H1 (cell line): ENCODE measurements at regions of chr1 and their contacts with region 1.

Region 1: DNA sequence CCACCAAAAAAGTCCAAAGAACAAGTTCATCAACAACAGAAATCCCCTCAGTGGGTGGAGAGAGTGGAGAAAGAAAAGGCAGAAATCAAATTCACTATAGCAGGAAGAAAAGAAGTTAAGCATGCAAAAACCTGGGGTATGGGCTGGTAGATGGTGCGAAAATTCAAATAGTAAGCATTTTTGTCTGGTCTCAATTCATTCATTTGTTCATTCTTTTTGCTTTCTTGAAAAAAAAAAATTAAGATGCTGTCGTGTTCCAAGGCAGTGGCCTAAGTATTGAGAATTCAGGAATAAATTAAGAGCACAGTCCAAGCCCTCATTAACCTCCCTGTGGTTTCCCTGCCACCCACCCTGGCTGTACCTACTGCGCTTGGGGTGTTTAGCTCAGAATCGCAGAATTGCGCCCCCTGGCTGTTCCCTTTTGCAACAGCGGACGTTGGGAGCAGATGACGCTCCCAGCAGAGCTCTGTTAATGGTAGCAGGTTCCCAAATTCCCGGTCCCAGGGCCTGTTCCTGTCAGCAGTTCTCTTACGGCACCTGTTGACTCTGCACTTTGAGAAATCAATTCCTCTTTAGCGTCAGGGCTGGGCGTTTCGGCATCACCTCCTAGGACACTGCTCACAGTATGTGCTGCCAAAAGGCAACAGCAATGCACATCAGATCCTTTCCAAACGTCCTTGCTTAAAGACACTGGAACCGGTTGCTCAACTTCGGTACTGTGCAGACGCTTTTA is 34.0 kb upstream of the SSX2IP start:
- DNase-seq: peak; percentile 69 to 89
- H3K4me3 ChIP-seq: no peak overlapping the region
- H3K27ac ChIP-seq: no peak overlapping the region
- H3K4me1 ChIP-seq: peaks cover 0 to 5% (median 0%) of the 10 kb centered on the region in 4 experiments; a peak in 2 of 7 replicates
- H3K27me3 ChIP-seq: no peaks in the 10 kb centered on the region
- CTCF ChIP-seq: peak; percentile 89 to 93 (median 89)
- EP300 ChIP-seq: no peak
- POLR2A ChIP-seq: no peak
- RAD21 ChIP-seq: peak; percentile 69 to 78

Region 2: GRCh38 chr1:83978056-83978455 is 746.2 kb before region 1 on chr1:
- CTCF ChIA-PET with region 1: no interaction called
- POLR2A ChIA-PET with region 1: no interaction called
- DNase-seq: no peak
- H3K4me3 ChIP-seq: no peak overlapping the region
- H3K27ac ChIP-seq: no peak overlapping the region
- H3K4me1 ChIP-seq: no peaks in the 10 kb centered on the region
- H3K27me3 ChIP-seq: no peaks in the 10 kb centered on the region
- CTCF ChIP-seq: no peak
- EP300 ChIP-seq: no peak
- POLR2A ChIP-seq: no peak
- RAD21 ChIP-seq: no peak

Region 3: GRCh38 chr1:84668185-84668584 is 56.1 kb before region 1 on chr1:
- CTCF ChIA-PET with region 1: interaction called, 21 read pairs
- POLR2A ChIA-PET with region 1: no interaction called
- DNase-seq: no peak
- H3K4me3 ChIP-seq: no peak overlapping the region
- H3K27ac ChIP-seq: no peak overlapping the region
- H3K4me1 ChIP-seq: peaks cover 0 to 2% (median 0%) of the 10 kb centered on the region in 4 experiments; a peak in 1 of 7 replicates
- H3K27me3 ChIP-seq: peaks cover 0 to 1% (median 0%) of the 10 kb centered on the region in 4 experiments; a peak in 1 of 7 replicates
- CTCF ChIP-seq: peak in 2 of 3 experiments; percentile 44 to 47; a peak in 2 of 4 replicates
- EP300 ChIP-seq: no peak
- POLR2A ChIP-seq: no peak
- RAD21 ChIP-seq: peak; percentile 64 to 76

Region 4: DNA sequence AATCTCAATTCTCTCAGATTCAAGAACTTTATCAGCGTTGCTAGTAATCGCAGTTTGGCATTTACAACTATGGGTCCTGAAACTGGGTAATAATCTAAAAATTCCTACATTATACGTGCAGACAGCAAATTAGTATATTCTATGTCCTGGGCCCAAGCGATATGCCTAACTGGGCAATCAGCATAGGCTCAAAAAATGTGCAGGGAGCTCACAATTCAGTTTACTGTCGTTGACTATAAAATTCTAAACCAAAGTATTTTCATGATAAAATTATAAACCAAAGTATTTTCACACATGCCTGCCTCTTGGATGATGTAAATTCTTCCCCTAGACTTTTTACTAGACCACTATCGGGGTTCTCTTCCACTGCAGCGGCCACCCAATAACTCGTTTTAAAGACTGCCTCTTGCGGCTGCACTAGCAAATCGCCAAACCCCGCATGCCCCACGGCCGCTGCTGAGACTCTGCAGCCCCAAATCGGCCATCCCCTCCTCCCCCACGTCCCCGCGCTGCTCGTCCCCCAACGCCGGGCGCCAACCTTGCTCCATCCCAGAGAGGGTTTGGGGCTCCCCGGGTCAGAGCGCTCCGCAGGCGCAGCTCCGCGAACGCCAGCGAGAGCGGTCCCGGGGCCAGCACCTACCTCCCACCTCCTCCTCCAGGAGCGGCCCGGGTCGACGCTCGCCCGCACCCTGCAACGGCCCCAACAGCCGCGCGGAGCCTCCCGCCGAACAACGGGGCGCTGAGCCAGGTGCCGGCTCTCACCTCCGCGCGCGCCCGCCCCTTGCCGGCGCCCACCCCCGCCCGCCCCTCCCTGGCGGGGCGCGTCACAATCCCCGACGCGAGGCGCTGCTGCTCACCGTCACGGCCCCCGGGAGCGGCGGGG is 34.5 kb before region 1 on chr1:
- CTCF ChIA-PET with region 1: interaction called, 16 read pairs
- POLR2A ChIA-PET with region 1: interaction called, 4 read pairs
- DNase-seq: peak in 1 of 2 experiments; percentile 65
- H3K4me3 ChIP-seq: peak overlapping the region; percentile 54 to 89 (median 64)
- H3K27ac ChIP-seq: peak overlapping the region; percentile 81
- H3K4me1 ChIP-seq: peaks cover 2 to 7% (median 3%) of the 10 kb centered on the region in 4 experiments; a peak in 4 of 7 replicates
- H3K27me3 ChIP-seq: no peaks in the 10 kb centered on the region
- CTCF ChIP-seq: peak in 2 of 3 experiments; percentile 28 to 35; a peak in 3 of 4 replicates
- EP300 ChIP-seq: no peak
- POLR2A ChIP-seq: no peak; a peak in 1 of 3 replicates
- RAD21 ChIP-seq: peak in 1 of 2 experiments; percentile 17; a peak in 2 of 4 replicates

Region 5: DNA sequence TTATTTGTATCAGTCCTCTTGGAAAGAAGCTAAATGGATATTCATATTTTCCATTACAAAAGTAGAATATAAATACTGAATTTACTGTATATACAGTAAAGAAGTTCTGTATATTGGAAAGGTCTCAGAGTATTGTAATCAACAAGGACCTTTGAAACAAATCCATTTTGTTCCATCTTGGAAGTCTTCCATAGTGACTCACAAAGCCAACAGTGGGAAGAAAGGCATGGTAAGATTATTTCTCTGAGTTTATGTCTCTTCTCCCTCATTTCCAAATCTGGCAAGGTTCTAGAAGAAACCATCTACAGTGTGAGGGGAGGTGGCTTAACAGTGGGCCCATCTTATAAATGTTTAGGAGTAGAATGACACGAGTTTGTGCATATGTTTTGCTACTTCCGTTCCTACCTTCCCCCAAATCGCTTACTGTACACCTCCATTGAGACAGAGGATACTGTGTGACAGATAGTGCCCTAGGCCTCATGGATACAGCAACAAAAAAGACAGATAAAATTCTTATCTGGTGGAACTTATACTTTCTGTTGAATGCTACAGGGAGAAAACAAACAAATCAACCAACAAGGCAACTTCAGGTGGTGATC is 11.9 kb before region 1 on chr1:
- CTCF ChIA-PET with region 1: interaction called, 58 read pairs
- POLR2A ChIA-PET with region 1: no interaction called
- DNase-seq: no peak
- H3K4me3 ChIP-seq: no peak overlapping the region
- H3K27ac ChIP-seq: no peak overlapping the region
- H3K4me1 ChIP-seq: peaks cover 0 to 5% (median 2%) of the 10 kb centered on the region in 4 experiments; a peak in 3 of 7 replicates
- H3K27me3 ChIP-seq: no peaks in the 10 kb centered on the region
- CTCF ChIP-seq: no peak
- EP300 ChIP-seq: no peak
- POLR2A ChIP-seq: no peak
- RAD21 ChIP-seq: no peak

Region 6: GRCh38 chr1:84742653-84743052 is 18.4 kb after region 1 on chr1:
- CTCF ChIA-PET with region 1: interaction called, 50 read pairs
- POLR2A ChIA-PET with region 1: no interaction called
- DNase-seq: no peak
- H3K4me3 ChIP-seq: no peak overlapping the region
- H3K27ac ChIP-seq: no peak overlapping the region
- H3K4me1 ChIP-seq: peaks cover 0 to 14% (median 8%) of the 10 kb centered on the region in 4 experiments; a peak in 5 of 7 replicates
- H3K27me3 ChIP-seq: no peaks in the 10 kb centered on the region
- CTCF ChIP-seq: no peak
- EP300 ChIP-seq: no peak
- POLR2A ChIP-seq: no peak
- RAD21 ChIP-seq: no peak